Dendritic cell treated with granulocyte-macrophage colony-stimulating factor and Interleukin-4, amounts not matched to agents 40 ng/mL and 50 ng/mL, for 4 days (primary cell): ENCODE measurements at regions of chr1 and their contacts with region 1.

Region 1: DNA sequence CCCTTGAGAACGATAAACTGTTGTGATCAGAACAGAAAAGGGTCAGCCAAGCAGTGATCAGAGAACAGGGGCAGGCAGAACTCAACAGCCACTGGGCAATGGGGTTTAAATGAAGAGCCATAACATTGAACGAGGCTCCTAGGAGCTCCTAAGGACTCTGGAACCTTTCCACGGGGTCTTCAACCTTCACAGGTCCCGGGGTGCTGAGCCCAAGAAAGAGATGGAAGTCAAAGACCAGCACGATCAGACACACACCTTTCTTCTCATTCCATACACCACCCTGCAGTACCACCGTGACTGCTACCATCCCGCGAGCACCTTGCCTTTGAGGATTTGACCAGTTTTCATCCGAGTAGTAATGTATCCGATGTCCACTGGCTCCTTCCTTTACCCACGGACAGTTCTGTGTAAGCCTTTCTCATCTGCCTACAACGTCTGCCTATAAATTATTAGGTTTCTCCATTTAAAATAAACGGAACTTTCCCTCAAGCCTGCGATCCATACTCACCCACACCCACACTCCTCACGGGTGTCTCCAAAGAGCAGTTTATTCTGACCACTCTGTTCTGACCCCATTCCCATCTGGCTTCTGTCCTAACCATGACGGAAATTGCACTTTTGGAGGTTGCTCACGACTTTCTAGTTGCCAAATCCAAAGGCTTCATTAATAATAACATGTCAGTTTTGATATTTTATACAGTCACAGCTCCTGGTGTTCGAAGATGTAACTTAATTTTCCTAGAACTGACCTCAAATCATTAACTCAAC is 16.8 kb upstream of the HHAT start:
- H3K4me3 Mint-ChIP-seq: no peak overlapping the region
- H3K27ac Mint-ChIP-seq: no peak overlapping the region
- H3K4me1 Mint-ChIP-seq: peaks cover 6% of the 10 kb centered on the region
- H3K27me3 Mint-ChIP-seq: peaks cover 32% of the 10 kb centered on the region

Region 2: GRCh38 chr1:209860293-209860881 is 451.5 kb before region 1 on chr1:
- intact Hi-C with region 1: loop called (anchors 2 kb)
- H3K4me3 Mint-ChIP-seq: no peak overlapping the region
- H3K27ac Mint-ChIP-seq: no peak overlapping the region
- H3K4me1 Mint-ChIP-seq: peaks cover under 1% of the 10 kb centered on the region
- H3K27me3 Mint-ChIP-seq: peaks cover 11% of the 10 kb centered on the region

Region 3: DNA sequence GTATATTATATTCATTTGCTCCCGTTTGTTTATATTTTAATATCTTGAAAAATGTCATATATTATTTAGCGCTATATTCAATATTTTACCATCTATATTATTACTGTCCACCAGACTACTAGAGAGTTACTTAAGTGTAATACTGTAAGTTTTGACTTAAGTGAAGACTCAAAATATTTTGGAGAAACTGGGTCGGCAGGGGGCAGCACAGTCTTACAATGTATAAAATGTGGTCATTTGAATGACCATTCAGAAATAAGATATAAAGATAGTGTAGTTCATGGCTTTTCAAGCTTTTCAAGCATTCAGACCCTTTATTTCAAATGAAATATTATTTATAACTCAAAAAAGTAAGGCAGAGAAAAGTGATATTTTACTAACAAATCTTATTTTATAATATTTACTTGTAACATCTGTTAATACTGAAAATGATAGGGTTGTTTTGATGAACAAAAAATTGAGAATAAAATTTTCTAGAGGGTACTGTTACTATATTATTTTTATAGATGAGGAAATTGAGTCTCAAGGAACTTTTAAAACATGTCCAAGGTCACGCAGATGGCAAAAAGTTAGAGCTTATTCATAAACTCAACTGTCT is 168.3 kb before region 1 on chr1:
- intact Hi-C with region 1: loop called (anchors 1 kb)
- H3K4me3 Mint-ChIP-seq: no peak overlapping the region
- H3K27ac Mint-ChIP-seq: no peak overlapping the region
- H3K4me1 Mint-ChIP-seq: no peaks in the 10 kb centered on the region
- H3K27me3 Mint-ChIP-seq: no peaks in the 10 kb centered on the region